Astrocyte of the cerebellum (primary cell): ENCODE measurements at regions of chr20 and their contacts with region 1.

Region 1: DNA sequence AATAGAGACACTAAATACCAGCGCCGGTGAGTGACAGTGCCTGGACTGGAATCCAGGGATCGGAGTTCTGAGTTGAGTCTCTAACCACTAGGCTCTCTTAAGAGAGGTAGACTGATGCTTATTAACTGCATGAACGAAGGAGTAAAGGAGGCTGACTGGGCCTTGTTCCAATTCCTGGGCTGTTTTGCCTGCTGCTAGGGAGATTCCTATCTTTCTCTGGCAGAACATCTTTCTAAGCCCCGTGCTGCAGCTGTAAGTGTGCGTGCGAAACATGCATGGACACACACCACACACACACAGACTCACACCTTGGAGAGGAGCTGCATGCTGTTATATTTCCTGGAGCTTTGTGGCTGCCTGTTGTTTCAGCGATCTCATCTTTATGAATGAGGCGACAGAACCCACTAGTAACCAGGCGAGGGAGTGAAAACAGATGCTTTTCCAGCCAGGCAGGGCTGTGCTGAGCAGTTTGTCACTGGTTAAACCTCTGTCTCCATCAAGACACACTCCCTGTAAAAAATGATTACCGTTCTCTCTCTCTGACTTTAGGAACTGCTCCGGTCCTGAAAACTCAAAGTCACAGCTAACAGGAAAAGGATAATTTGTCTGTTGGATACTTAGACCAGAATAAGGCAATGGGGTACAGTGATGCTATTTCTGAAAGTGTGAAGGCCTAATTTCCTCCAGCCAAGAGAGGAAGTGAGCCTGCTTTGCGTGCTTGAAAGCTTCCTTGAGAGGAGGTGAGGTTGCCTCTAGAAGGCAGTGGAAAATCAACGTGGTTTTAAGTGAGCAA is 157.4 kb upstream of the ZNF217 start:
- DNase-seq: peak; percentile 77
- H3K4me3 ChIP-seq: no peak overlapping the region
- CTCF ChIP-seq: no peak

Region 2: DNA sequence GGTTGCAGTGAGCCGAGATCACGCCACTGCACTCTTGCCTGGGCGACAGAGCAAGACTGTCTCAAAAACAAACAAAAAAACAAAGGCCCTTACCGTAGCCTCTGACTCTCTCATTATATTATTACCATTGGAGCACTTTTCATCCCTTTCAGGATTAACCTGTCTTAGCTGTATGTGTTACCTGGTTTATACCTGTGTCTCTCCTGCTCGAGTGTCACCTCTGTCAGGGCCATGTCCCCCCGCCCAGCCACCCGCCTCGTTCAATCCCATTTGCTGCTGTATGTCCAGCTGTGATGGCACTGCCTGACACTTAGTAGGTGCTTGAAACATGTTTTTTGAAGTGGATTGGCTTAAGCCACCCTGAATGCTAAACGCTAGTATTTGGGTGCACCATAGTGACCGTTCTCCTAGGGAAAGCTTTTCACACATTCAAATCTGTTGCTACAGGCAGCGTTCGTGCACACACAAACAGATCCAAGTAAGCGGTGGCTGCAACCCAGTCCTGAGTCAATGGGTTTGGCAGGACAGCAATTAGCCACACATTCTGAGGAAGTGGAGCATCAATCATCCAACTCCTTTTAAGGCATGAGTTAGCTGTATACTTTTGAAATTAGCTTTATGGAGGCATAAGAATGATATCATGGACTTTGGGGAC is 58.5 kb before region 1 on chr20:
- in situ Hi-C with region 1: loop called (anchors 5 kb)
- DNase-seq: peak; percentile 90
- H3K4me3 ChIP-seq: no peak overlapping the region
- CTCF ChIP-seq: no peak

Region 3: DNA sequence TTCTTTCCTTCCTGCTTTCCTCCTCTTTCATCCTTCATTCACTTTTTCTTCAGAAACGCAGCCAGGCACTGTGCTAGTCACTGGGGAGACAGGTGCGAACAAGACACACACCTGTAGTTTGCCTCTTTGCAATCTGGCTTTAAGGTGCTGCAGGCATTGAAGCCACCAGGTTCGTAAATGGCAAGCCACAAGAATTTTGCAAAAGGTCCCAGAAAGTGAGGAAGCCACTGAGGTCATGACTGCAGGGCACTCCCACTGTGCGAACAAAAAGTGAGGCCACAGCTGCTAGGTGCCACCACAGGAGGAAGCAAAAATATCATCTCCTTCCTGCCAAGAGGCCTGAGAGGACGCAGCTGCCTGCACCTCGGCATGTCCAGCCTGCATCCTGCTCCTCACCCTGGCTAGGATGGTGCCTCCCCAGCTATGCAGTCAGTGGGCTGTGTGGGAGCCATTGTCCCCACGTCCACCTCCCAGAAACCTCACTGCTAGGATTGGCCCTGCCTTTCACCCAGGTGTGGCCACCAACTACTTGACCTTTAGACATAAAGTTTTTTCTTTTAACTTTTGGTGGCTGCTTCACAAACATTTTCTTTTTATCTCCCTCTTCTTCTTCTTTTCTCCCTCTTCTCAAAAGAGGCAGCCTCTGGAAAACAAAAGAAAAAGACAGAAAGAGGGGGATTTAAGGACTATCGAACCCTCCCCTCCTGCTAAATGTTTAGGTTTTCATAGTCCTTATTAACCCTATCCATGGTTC is 88.6 kb after region 1 on chr20:
- in situ Hi-C with region 1: loop called (anchors 5 kb)
- DNase-seq: no peak
- H3K4me3 ChIP-seq: no peak overlapping the region
- CTCF ChIP-seq: no peak